AG04449 (cell line): ENCODE measurements at regions of chr1 and their contacts with region 1.

Region 1: GRCh38 chr1:168342572-168343280 is 62.0 kb downstream of the TBX19 start:
- DNase-seq: peak; percentile 59
- H3K4me3 ChIP-seq: peak overlapping the region; percentile 29
- CTCF ChIP-seq: peak; percentile 87

Region 2: DNA sequence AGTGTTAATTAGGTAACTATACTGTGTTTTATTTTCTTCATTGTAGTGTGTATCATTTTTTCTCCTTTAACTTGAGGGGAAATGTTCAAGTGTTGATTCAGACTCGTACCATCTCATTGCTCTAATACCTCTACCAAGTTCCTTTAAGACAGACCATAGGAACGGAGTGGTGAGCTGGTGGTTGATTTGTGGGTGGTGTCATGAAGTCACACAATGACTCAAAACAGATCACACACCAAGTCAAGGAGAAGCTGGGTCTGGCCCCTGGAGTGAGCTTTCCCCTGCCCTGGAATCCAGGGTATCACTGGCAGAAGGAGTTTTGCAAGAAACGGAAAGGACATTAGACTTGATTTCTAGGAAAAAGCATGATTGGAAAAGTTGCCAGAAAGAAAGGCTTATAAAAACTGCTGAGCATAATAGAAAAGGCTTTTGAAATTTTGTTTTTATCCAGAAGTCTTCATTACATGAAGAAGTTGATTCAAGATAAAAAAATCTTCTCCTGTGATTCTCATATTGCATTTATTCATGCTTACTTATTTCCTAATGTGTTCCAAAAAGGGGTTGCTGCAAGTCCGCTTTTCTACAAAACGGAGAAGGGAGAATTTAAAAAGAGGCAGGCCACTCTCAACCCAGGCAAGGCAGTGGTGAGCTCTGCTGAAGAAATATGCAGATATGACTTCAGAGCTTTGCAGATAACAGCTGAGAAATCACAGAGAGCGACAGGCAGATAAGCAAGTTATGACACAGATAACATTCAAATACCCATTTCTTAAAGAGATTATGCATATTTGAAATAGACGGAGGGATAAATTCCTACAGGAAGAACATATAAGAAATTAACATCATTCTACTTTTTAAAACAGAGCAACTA is 17.7 kb after region 1 on chr1:
- CTCF ChIA-PET with region 1: interaction called, 20 read pairs
- POLR2A ChIA-PET with region 1: no interaction called
- DNase-seq: no peak
- H3K4me3 ChIP-seq: no peak overlapping the region
- CTCF ChIP-seq: no peak

Region 3: DNA sequence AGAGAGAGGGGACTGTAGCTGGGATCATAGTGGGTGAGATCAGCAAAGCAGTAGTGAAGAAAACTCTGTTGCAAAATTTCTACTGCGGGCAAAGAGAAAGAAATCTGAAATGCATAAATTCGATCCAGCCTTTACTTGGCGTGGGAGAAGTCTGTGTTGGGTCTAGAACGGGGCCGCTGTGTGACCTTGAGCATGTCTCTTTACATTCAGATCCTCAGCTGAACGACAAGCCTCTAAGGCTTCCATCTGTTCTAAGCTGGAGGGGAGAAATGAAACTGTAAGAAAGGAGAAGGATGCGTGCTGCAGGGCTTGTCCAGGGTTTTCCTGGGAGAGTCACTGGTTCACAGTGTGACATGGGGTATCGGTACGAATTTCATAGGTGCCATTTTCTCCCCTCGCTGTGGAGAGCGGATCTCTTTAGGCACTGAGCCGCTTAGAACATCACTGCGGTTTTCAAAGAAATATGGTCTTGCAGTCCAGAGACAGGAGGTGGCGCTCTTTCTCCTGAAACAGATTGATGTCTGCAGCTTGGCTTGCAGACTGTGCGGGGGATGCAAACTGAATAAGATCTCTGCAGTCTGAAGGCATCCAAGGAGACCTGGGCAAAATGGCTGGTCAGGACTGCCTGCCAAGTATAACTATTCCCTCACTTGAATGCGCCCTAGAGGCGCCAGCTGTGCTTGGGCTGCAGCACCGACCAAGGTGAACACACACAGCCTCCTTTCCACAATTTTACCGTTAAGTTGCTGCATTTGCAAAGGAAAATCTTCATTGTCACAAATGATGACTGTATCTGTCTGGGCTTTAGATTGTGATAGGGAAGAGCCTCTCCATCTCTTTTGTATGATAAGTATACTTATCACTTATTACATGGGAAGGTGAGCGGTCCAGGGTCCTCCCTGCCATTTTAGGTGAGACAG is 97.0 kb after region 1 on chr1:
- CTCF ChIA-PET with region 1: interaction called, 27 read pairs
- POLR2A ChIA-PET with region 1: no interaction called
- DNase-seq: peak; percentile 52
- H3K4me3 ChIP-seq: peak overlapping the region; percentile 42
- CTCF ChIP-seq: peak; percentile 79

Region 4: GRCh38 chr1:168585191-168585590 is 242.5 kb after region 1 on chr1:
- CTCF ChIA-PET with region 1: interaction called, 17 read pairs
- POLR2A ChIA-PET with region 1: no interaction called
- DNase-seq: no peak
- H3K4me3 ChIP-seq: no peak overlapping the region
- CTCF ChIP-seq: no peak

Region 5: GRCh38 chr1:169348383-169349036 is 1005.8 kb after region 1 on chr1:
- CTCF ChIA-PET with region 1: interaction called, 11 read pairs
- POLR2A ChIA-PET with region 1: no interaction called
- DNase-seq: no peak
- H3K4me3 ChIP-seq: no peak overlapping the region
- CTCF ChIP-seq: peak; percentile 53